OCI-LY7 (cell line): ENCODE measurements at regions of chr9 and their contacts with region 1.

Region 1: GRCh38 chr9:33473643-33474352 is at the start of gene NOL6:
- DNase-seq: peak; percentile 99
- H3K4me3 ChIP-seq: peak within 1 kb of the TSS; percentile 85
- H3K27ac ChIP-seq: no peak within 1 kb of the TSS
- H3K4me1 ChIP-seq: peaks cover 12% of the 10 kb centered on the region
- CTCF ChIP-seq: no peak
- total RNA-seq, gene NOL6: 26.4 and 28.8 TPM in 2 replicates

Region 2: DNA sequence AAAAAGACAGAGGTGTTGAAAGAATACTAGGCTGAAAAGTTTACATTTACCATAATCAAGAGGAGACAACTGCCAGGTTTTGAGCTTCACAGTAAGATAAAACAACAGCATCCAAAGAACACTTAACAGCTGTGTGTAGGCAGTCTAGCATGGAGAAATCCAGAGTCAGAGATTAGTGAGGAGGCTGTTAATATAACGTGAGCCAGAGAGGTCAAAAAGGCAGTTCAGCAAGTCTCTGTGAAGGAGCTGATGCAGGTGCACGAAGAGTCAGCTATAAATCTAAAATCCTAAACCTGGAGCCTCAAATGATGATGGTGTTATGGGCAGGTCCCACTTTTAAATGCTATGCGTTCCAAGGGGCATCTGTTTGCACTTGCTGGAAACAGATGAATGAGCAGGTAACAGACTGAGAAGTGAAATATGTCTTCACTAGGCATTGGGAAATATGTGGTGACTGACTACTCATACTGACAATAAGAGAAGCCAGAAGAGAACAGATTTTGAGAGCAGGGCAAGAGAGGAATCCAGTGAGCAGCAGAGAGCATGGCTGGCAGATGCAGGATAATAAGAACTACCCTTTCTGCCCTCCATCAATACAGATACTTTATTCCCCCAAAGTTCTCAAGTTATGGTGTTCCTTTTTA is 481.1 kb before region 1 on chr9:
- CTCF ChIA-PET with region 1: no interaction called
- POLR2A ChIA-PET with region 1: no interaction called
- intact Hi-C with region 1: no loop called
- DNase-seq: no peak
- H3K4me3 ChIP-seq: no peak overlapping the region
- H3K27ac ChIP-seq: no peak overlapping the region
- H3K4me1 ChIP-seq: no peaks in the 10 kb centered on the region
- CTCF ChIP-seq: no peak

Region 3: GRCh38 chr9:33354651-33355211 is 119.1 kb before region 1 on chr9:
- CTCF ChIA-PET with region 1: no interaction called
- POLR2A ChIA-PET with region 1: no interaction called
- intact Hi-C with region 1: no loop called
- DNase-seq: no peak
- H3K4me3 ChIP-seq: no peak overlapping the region
- H3K27ac ChIP-seq: no peak overlapping the region
- H3K4me1 ChIP-seq: no peaks in the 10 kb centered on the region
- CTCF ChIP-seq: no peak

Region 4: GRCh38 chr9:33404788-33405362 is 68.9 kb before region 1 on chr9:
- CTCF ChIA-PET with region 1: interaction called, 10 read pairs
- POLR2A ChIA-PET with region 1: interaction called, 4 read pairs
- intact Hi-C with region 1: no loop called
- DNase-seq: peak; percentile 13
- H3K4me3 ChIP-seq: no peak overlapping the region
- H3K27ac ChIP-seq: no peak overlapping the region
- H3K4me1 ChIP-seq: no peaks in the 10 kb centered on the region
- CTCF ChIP-seq: no peak

Region 5: DNA sequence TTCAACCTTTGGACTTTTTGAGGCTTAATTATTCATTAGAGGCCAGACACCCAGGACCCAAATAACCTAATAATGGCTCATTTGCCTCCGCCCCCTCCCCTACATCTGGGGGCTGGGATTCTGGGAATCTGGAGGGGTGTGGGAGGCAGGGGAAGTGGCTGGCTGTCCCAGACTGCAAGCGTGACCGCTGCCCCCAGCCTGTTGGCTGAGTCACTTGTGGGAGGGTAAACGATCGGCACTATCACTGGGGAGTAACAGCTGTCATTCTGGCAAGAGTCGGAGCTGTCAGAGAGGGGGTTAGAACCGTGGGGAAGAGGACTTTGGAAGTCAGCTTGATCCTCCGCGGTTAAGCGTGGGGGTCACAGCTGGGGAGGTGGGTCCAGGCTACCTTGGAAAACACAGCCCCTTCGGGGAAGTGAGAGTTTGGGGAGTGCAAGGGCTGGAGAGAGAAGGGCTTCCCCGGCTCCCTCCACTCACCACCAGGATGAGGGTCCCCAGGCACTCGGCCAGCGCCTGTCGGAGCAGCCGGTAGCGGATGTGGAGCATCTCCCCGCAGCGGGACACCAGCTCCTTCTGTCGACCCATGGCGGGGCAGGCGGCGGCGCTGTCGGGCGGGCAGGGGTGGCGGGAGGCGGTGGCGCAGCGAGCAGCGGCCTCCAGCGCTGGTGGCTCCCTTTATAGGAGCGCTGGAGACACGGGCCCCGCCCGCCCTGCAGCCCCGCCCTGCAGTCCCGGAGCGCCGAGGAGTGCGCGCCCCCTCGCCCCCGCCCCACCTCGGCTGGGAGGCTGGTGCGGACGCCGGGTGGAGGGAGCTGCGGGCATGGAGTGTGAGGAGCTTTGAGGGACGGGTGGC is 26.6 kb before region 1 on chr9 and contains the start of gene AQP3:
- CTCF ChIA-PET with region 1: interaction called, 28 read pairs
- POLR2A ChIA-PET with region 1: interaction called, 50 read pairs
- intact Hi-C with region 1: no loop called
- DNase-seq: peak; percentile 73
- H3K4me3 ChIP-seq: peak within 1 kb of the TSS; percentile 65
- H3K27ac ChIP-seq: peak within 1 kb of the TSS; percentile 82
- H3K4me1 ChIP-seq: peaks cover 28% of the 10 kb centered on the region
- CTCF ChIP-seq: peak; percentile 66
- total RNA-seq, gene AQP3: 16.0 TPM in 2 replicates

Region 6: GRCh38 chr9:33458444-33458843 is 15.4 kb before region 1 on chr9:
- CTCF ChIA-PET with region 1: interaction called, 28 read pairs
- POLR2A ChIA-PET with region 1: interaction called, 50 read pairs
- intact Hi-C with region 1: no loop called
- DNase-seq: peak; percentile 52
- H3K4me3 ChIP-seq: no peak overlapping the region
- H3K27ac ChIP-seq: peak overlapping the region; percentile 53
- H3K4me1 ChIP-seq: peaks cover 31% of the 10 kb centered on the region
- CTCF ChIP-seq: no peak